Left cardiac atrium (tissue), 4 donors: ENCODE measurements at regions of chr16 and their contacts with region 1.

Region 1: GRCh38 chr16:11218604-11218962 is 37.4 kb downstream of the SOCS1 start:
- DNase-seq: no peak
- ATAC-seq: no peak

Region 2: DNA sequence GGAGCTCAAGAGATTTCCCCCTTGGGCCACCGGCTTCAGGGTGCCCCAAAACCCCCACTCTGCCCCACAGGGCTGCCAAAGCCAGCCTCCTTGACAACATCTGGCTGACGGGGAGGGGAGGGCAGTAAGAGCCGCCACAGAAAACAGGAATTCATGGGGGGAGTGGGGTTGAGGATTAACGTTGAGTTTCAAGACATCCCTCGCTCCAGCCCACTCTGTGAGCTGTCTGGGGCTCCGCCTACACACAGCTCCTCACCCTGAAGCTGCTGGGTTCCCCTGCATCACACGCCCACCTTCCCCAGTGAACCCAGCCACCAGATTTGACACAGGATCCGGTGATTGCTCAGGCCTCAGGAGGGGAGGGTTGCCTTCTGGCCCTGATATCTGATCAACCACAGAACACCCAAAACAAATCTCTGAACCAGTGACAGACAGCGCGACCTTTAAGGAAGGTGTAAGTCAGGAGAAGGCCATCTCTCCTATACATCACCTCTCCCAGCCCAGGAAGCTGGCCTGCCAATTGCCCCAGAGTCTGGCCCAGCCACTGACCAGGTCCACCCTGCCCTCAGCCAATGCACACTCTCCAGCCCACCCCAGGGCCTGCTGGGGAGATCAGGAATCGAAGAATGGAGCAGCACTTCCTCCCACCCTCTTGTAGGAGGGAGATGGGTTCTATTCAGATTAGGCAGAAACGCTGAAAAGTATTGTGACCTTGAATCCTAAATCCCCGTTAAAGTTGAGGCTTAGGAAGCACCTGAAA is 142.1 kb before region 1 on chr16:
- intact Hi-C with region 1: no loop called
- DNase-seq: no peak
- ATAC-seq: no peak

Region 3: DNA sequence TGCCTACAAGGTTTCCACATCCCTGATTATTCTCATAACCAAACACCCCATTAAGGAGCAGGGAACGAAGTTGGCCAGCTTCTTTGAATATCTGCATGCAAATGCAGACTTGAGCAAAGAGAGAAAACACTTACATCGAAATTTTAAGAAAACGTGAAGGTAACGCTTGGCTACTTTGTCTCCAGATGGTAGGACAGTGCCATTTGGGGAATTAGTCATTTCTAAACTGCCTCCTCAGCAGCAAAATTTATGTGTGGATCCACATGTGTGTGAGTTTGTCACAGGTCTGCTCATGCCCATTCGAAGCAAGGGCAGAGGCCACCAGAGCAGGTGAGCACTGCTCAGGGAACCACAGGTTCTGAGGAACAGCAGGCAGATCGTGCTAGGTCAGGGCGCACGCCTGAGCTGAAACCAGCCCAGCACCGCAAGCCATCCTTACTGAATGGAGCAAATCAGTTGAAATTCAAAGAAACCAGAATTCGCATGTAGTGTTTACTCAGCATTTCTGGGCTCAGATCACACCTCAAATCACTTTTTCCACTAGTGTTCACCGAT is 42.7 kb before region 1 on chr16:
- intact Hi-C with region 1: loop called in 1 of 2 experiments (anchors 5 kb)
- DNase-seq: no peak
- ATAC-seq: no peak